GM10248 (cell line): ENCODE measurements at regions of chr14 and their contacts with region 1.

Region 1: GRCh38 chr14:23120541-23121251 is 1.6 kb upstream of the CEBPE start:
- DNase-seq: peak; percentile 90
- CTCF ChIP-seq: peak; percentile 100

Region 2: DNA sequence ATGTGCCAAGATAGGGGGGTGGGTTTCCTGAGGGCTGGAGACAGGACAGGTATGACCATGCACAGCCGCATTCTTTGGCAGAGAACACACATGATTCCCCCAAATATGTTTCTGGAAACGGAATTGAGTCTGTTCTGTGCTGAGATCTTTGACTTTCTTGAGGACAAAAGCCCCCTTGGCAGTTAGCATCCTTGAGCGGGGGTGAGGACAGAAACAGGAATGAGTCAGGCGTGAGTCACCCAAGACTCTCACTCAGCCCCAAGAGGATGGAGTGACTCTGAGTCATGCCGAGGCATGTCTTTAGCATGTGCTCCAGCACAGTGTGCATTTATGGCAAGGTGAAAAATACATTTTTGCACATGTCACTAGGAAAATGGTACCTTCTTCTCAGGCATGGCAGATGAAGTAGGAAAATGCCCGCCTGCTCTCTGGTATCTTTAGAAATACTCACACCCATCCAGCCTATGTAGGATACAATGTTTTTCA is 583.8 kb before region 1 on chr14:
- CTCF ChIA-PET with region 1: no interaction called
- POLR2A ChIA-PET with region 1: no interaction called
- DNase-seq: peak; percentile 77
- CTCF ChIP-seq: no peak

Region 3: DNA sequence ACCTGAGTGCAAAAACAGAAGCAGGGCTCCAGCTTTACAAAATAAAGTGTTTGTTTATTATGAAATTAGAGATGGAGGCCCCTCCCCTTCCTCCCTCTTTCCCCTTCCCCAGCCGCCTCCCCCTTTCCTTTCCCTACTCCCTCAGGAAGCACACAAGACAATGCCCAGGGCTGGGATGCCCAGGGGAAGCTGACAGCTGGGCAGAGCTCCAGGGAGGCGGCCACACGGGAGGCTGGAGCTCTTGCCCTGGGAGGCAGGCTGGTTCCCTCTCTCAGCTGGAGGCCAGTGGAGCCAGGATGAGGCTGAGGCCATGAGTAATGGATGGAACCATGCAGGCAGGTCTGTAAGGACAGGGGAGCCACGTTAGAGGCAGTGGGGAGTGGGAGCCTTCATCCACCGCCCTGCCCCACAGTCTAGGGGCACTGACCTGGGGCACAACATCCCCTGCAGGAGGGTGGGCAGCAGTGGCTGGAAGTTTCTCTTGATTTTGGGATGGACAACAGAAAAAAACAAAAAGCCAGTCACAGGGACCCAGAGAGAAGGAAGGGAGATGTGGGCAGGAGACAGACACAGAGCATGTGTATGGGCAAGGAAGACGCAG is 73.6 kb before region 1 on chr14:
- CTCF ChIA-PET with region 1: no interaction called
- POLR2A ChIA-PET with region 1: no interaction called
- DNase-seq: no peak
- CTCF ChIP-seq: no peak

Region 4: GRCh38 chr14:23095196-23096108 is 25.2 kb before region 1 on chr14 and contains the start of gene C14orf119:
- CTCF ChIA-PET with region 1: interaction called, 27 read pairs
- POLR2A ChIA-PET with region 1: interaction called, 3 read pairs
- DNase-seq: peak; percentile 99
- CTCF ChIP-seq: no peak

Region 5: DNA sequence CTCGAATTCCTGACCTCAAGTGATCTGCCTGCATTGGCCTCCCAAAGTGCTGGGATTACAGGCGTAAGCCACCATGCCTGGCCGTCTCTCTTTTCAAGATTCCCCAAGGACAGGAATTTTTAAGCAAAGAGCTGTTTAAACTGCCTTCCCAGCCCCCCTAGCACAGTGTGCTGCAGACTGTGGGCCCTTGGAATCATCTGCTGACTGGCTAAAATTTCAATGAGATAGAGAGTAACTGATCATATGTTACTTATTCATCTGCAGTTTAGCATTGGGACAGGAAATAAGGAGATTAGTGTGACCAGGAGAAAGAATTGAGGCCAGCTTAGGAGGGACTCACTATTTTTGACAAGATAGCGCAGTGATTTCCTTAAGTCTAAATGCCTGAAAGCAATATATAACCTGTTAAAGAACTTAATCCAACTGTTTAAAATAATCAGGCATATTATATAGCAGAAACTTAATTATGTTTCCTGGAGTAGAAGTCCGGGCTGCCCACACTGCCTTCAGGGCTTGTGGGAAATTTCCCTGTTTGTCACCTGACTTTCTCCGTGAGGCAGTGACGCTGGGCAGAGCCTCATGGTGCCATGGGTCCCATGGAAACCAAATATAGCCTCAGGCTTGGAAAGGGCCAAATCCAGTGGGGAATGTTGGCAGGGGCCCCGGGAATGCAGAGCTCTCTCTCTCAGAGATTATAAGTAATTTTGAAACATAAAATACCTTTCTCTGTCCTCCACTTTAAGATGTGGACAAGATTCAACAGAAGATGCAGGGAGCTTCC is 21.2 kb after region 1 on chr14:
- CTCF ChIA-PET with region 1: interaction called, 32 read pairs
- POLR2A ChIA-PET with region 1: no interaction called
- DNase-seq: no peak
- CTCF ChIP-seq: no peak

Region 6: GRCh38 chr14:23174276-23175184 is 53.8 kb after region 1 on chr14:
- CTCF ChIA-PET with region 1: interaction called, 164 read pairs
- POLR2A ChIA-PET with region 1: interaction called, 3 read pairs
- DNase-seq: no peak
- CTCF ChIP-seq: no peak

Region 7: GRCh38 chr14:23286020-23286905 is 165.6 kb after region 1 on chr14 and contains the start of gene HOMEZ:
- CTCF ChIA-PET with region 1: interaction called, 10 read pairs
- POLR2A ChIA-PET with region 1: no interaction called
- DNase-seq: peak; percentile 97
- CTCF ChIP-seq: no peak

Region 8: GRCh38 chr14:23320774-23321571 is 200.3 kb after region 1 on chr14 and contains the start of gene PABPN1:
- CTCF ChIA-PET with region 1: interaction called, 22 read pairs
- POLR2A ChIA-PET with region 1: no interaction called
- DNase-seq: peak; percentile 96
- CTCF ChIP-seq: no peak

Region 9: GRCh38 chr14:23605931-23606585 is 485.4 kb after region 1 on chr14:
- CTCF ChIA-PET with region 1: no interaction called
- POLR2A ChIA-PET with region 1: no interaction called
- DNase-seq: peak; percentile 76
- CTCF ChIP-seq: no peak